ENCODE measurements at regions of chr17 and their contacts with region 1.

Region 1: DNA sequence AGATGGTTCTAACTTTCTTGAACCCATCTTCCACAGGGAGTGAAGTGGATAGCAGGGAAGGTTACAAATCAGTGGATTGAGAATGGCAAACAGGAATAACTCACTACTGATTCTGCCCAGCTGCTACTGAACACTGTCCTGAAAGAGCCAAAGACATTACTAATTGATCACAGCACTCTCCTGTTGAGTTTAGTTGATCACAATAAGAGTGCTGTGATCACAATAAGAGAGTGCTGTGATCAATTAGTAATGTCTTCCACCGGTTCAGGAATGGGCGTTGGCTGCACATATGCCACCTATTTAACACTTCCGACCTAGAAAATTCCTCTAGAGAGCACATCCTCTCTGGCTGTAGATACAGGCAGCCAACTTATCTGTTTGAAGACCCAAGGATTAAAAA is 11.4 kb downstream of the CFAP97D1 start:
- DNase-seq: no peak
- H3K4me3 ChIP-seq: no peak overlapping the region
- H3K27ac ChIP-seq: no peak overlapping the region
- H3K4me1 ChIP-seq: no peaks in the 10 kb centered on the region
- H3K27me3 ChIP-seq: no peaks in the 10 kb centered on the region
- CTCF ChIP-seq: no peak
- POLR2A ChIP-seq: no peak

Region 2: DNA sequence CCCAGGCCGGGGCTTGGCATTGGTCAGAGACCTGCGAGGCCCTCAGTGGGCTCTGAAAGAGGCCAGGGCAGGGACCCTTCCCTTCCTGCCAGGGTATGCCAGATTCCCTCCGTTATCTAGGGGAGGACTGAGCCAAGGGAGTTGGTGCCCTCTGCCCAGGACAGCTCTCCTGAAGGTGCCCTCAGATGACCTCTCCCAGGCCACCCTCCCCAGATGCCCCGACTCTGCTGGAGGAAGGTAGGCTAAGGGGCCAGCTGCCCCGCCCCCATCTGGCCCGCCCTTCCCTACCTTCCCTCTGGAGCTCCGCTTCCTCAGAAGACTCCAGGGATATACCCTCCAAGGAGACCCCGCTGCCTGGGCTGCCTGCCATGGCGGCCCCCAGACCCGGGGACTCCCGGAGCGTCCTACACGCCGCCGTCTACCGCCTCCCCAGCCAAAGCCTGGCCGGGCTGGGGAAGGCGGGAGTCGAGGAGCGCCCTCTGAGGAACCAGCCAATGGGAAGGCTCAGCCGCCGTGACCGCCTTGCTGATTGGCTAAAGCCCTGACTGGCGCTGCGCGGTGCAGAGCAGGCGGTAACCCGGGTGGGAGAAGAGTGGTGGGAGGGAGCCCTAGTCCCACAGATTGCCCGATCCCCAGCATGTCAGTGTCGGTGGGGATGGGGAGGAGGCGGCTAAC is 108.7 kb after region 1 on chr17:
- intact Hi-C with region 1: no loop called
- DNase-seq: peak; percentile 83 to 84
- H3K4me3 ChIP-seq: peak overlapping the region; percentile 16 to 37
- H3K27ac ChIP-seq: no peak overlapping the region
- H3K4me1 ChIP-seq: peaks cover 0 to under 1% of the 10 kb centered on the region in 2 donors
- H3K27me3 ChIP-seq: no peaks in the 10 kb centered on the region
- CTCF ChIP-seq: peak in 1 of 4 experiments; percentile 10
- POLR2A ChIP-seq: no peak

Region 3: GRCh38 chr17:43983515-43984411 is 192.2 kb after region 1 on chr17:
- intact Hi-C with region 1: no loop called
- DNase-seq: no peak
- H3K4me3 ChIP-seq: peak overlapping the region in 1 of 2 donors; percentile 20
- H3K27ac ChIP-seq: no peak overlapping the region
- H3K4me1 ChIP-seq: peaks cover 0 to 8% of the 10 kb centered on the region in 2 donors
- H3K27me3 ChIP-seq: peaks cover 5 to 33% of the 10 kb centered on the region in 2 donors
- CTCF ChIP-seq: no peak
- POLR2A ChIP-seq: no peak

Region 4: DNA sequence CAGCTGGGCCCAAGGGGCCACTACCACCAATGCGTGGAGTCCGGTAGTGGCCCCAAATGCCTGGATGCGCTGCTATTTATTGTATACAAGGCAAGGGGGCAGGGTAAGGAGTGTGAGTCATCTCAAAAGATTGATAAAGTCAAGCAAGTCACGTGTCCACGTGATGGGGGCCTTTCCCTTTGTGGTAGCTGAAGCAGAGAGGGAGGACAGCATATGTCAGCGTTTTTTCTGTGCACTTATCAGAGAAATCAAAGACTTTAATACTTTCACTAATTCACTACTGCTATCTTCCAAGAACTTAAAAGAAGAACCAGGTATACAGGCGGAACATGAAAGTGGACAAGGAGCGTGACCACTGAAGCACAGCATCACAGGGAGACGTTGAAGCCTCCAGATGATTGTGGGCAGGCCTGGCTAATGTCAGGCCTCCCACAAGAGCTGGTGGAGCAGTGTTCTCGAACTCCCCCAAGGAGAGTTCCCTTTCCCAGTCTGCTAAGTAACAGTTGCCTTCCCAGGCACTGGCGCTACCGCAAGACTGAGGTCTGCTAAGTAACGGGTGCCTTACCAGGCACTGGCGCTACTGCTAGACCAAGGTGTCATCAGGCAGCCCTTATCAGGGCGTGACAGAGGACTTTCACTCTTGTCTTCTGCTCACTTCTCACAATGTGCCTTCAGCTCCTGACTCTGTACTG is 368.1 kb after region 1 on chr17:
- intact Hi-C with region 1: loop called (anchors 10 kb)
- DNase-seq: peak in 1 of 2 donors; percentile 52
- H3K4me3 ChIP-seq: no peak overlapping the region
- H3K27ac ChIP-seq: peak overlapping the region; percentile 36 to 69
- H3K4me1 ChIP-seq: no peaks in the 10 kb centered on the region
- H3K27me3 ChIP-seq: no peaks in the 10 kb centered on the region
- CTCF ChIP-seq: no peak
- POLR2A ChIP-seq: no peak